ENCODE measurements at regions of chr2 and their contacts with region 1.

Region 1: DNA sequence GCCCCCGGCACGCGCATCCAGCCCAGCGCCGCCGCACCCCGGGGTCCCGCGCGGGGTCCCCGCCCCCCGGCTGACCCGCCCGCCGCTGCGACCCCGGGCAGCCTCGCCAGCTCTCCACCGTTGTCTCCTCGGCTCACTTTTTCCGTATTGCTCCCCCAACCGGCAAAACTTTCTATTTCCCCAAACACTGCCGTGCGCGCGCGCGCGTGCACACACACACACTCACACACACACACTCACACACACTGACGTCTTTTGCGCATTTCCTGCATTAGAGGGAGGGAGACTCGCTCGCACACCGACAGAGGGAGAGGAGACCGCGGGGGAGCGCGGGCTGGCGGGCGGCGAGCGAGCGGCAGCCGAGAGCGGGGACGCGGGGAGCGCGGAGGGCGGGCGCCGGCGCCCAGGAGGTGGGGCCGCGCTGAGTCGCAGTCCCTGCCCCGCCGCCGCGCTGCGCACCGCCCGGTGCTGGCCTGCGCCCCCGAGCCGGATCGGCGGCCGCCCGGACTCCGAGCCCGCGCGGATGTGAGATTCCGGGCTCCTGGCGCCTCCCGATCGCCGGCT is 542 bp upstream of the PRKCE start:
- DNase-seq: peak; percentile 97
- ATAC-seq: peak; percentile 87

Region 2: GRCh38 chr2:45627911-45628310 is 23.0 kb before region 1 on chr2:
- intact Hi-C with region 1: loop called (anchors 1 kb)
- DNase-seq: no peak
- ATAC-seq: no peak

Region 3: GRCh38 chr2:45935791-45936622 is 285.1 kb after region 1 on chr2:
- intact Hi-C with region 1: loop called (anchors 5 kb)
- DNase-seq: peak; percentile 92
- ATAC-seq: peak; percentile 90

Measured in sciatic nerve (tissue), 2 donors.